ENCODE measurements at regions of chr15 and their contacts with region 1.

Region 1: DNA sequence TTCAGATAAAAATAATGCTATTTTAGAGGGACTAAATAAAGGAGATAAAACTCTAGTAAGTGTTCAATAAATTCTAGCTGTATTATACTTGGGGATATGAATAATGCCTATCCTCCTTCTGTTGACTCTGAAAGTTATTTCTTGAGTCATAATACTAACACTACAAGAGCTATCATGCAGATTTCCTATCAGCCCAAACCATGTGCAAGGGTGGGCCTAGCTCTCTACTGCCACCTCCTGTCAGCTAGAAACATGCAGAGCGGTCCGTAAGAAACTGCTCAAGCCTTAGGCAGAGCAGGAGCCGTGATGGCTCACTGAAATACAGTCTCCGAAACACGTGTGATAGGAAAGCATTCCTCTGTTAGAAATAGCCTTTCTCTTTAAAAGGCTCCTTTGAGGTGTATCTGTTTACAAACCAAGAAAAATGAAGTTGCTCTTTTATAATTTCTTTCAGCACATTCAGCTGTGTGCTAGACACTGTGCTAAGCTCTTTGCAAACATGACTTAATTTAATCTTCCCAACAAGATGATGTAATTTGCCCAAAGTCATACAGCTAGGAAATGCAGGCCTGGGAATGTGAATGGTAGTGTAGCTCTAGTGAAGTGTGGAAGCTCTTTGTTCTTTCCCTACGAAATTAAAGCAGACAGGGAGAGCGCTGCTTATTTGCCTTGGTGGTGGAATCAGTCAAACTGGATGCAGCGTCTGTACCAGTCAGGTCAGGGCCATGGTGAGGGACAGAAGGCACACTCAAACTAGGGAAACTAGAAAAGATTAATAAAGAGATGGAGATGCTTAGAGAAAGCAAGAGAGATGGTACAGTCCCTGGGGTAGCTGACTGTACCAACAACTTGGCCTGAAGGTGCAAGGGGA is 43.1 kb downstream of the MTHFS start:
- DNase-seq: peak; percentile 79
- ATAC-seq: peak; percentile 99
- H3K4me3 Mint-ChIP-seq: no peak overlapping the region
- H3K27ac Mint-ChIP-seq: no peak overlapping the region
- H3K4me1 Mint-ChIP-seq: peaks cover 15% of the 10 kb centered on the region
- H3K27me3 Mint-ChIP-seq: no peaks in the 10 kb centered on the region
- CTCF ChIP-seq: peak; percentile 94

Region 2: DNA sequence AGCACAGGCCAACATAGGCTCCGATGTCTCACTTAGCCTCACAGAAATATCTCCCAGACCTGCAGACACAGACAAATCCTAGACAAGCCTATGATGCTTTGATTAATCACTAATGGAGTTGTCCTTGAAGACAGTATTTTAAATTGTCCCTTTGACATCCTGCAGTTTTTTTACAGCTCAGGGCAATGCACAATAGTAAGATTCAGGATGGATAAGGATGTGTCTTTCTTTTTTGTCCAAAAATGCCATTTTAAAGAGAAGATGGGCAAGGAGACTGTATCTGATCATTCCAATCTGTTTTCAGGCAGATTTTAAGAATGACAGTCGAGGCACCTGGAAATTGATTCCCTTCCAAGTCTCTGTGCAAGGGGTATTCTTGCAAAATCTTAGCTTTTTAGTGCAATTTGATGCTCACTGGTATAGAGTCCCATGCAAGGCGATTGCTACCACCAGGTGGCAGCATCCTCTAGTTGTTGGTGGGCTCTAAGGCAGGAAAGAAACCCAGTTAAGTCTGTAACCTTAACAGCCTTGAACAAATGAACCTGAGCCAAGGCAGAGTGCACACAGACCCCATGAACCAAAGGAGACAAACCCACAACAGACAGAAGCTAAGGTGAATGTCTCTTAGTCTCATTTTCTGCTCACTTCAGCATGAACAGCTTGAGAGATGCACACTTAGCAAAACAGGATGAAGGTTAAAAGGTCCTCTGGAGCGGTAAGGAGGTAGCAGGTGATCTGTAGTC is 472.8 kb before region 1 on chr15:
- CTCF ChIA-PET with region 1: interaction called, 35 read pairs
- POLR2A ChIA-PET with region 1: no interaction called
- intact Hi-C with region 1: no loop called
- DNase-seq: peak; percentile 89
- ATAC-seq: peak; percentile 83
- H3K4me3 Mint-ChIP-seq: no peak overlapping the region
- H3K27ac Mint-ChIP-seq: no peak overlapping the region
- H3K4me1 Mint-ChIP-seq: peaks cover 4% of the 10 kb centered on the region
- H3K27me3 Mint-ChIP-seq: no peaks in the 10 kb centered on the region
- CTCF ChIP-seq: peak; percentile 85

Region 3: DNA sequence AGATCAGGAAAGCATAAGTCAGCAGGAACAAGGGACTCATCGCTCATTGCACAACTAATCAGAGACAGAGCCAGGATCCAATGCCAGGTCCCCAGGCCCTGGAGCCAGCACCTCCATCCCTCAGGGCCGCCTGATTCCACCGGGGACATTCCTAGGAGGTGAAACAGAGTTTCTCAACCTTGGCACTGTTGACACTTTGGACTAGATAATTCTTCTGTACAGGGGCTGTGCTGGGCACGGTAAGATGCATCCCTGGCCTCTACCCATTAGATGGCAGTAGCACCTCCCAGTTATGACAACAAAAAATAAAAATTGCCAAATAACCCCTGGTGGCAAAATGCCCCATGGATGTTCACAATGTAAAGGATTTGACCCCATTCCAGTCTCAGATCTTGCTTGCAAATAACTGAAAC is 84.6 kb before region 1 on chr15:
- CTCF ChIA-PET with region 1: interaction called, 10 read pairs
- POLR2A ChIA-PET with region 1: no interaction called
- intact Hi-C with region 1: no loop called
- DNase-seq: peak; percentile 18
- ATAC-seq: no peak
- H3K4me3 Mint-ChIP-seq: no peak overlapping the region
- H3K27ac Mint-ChIP-seq: no peak overlapping the region
- H3K4me1 Mint-ChIP-seq: no peaks in the 10 kb centered on the region
- H3K27me3 Mint-ChIP-seq: peaks cover 5% of the 10 kb centered on the region
- CTCF ChIP-seq: peak; percentile 54

Region 4: GRCh38 chr15:79863886-79864285 is 10.2 kb after region 1 on chr15:
- CTCF ChIA-PET with region 1: interaction called, 29 read pairs
- POLR2A ChIA-PET with region 1: no interaction called
- intact Hi-C with region 1: no loop called
- DNase-seq: no peak
- ATAC-seq: no peak
- H3K4me3 Mint-ChIP-seq: no peak overlapping the region
- H3K27ac Mint-ChIP-seq: no peak overlapping the region
- H3K4me1 Mint-ChIP-seq: peaks cover 15% of the 10 kb centered on the region
- H3K27me3 Mint-ChIP-seq: no peaks in the 10 kb centered on the region
- CTCF ChIP-seq: no peak

Region 5: DNA sequence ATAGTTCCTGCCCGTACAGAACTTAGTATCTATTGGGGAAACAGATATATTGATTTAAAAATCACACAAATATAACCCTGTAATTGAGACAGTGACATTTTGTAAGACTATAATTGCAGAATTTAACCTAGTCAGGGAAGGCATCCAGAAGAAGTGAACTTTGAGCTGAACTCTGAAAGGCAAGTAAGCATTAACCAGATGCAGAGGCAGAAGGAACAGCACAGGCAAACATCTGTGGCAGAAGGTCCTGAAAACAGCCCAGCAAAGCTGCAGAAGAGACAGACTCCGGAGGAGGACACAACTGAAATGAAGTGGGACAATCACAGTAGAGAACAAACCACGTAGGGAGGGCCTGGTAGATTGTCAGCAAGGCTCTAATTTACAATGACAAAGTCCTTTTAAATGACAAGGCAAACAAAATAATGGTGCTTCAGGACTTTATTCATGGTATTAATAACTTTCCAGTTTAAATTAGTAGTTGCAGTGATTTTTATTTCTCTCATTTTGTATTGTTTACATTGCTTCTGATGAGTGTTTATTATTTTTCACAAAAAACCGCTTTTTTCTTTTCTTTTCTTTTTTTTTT is 102.8 kb after region 1 on chr15:
- CTCF ChIA-PET with region 1: interaction called, 10 read pairs
- POLR2A ChIA-PET with region 1: no interaction called
- intact Hi-C with region 1: no loop called
- DNase-seq: no peak
- ATAC-seq: no peak
- H3K4me3 Mint-ChIP-seq: no peak overlapping the region
- H3K27ac Mint-ChIP-seq: no peak overlapping the region
- H3K4me1 Mint-ChIP-seq: peaks cover 40% of the 10 kb centered on the region
- H3K27me3 Mint-ChIP-seq: no peaks in the 10 kb centered on the region
- CTCF ChIP-seq: no peak

Measured in activated CD8-positive, alpha-beta T cell treated with anti-CD3 and anti-CD28 coated beads for 36 hours (primary cell).